Calu3 (cell line): ENCODE measurements at regions of chr14 and their contacts with region 1.

Region 1: DNA sequence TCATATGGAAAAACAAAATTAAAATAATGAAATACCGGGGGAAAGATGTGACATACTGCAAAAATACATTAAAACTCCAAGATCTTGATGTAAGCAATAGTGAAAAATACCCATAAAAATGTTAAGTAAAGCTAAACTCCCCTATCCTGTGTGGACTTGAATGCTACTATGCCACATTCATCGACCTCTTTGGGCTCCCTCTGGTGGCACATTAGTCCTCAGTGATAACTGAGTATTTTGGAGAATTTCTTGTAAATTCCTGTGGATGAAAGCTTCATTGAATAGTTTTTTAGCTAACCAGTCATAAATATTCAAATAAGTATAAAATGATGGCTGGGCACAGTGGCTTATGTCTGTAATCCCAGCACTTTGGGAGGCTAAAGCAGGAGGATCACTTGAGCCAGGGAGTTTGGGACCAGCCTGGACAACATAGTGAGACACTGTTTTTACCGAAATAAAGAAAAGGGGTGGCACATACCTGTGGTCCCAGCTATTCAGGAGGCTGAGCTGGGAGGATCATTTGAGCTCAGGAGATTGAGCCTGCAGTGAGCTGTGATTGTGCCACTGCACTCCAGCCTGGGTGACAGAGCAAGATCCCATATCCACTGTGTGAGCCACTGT is 42.4 kb upstream of the SGPP1 start:
- DNase-seq: peak; percentile 55
- H3K4me3 Mint-ChIP-seq: no peak overlapping the region
- H3K27ac Mint-ChIP-seq: no peak overlapping the region
- H3K4me1 Mint-ChIP-seq: no peaks in the 10 kb centered on the region
- H3K27me3 Mint-ChIP-seq: no peaks in the 10 kb centered on the region
- CTCF ChIP-seq: no peak

Region 2: GRCh38 chr14:63388763-63389431 is 381.4 kb before region 1 on chr14:
- CTCF ChIA-PET with region 1: interaction called, 5 read pairs
- intact Hi-C with region 1: loop called (anchors 5 kb)
- DNase-seq: peak; percentile 68
- H3K4me3 Mint-ChIP-seq: no peak overlapping the region
- H3K27ac Mint-ChIP-seq: no peak overlapping the region
- H3K4me1 Mint-ChIP-seq: no peaks in the 10 kb centered on the region
- H3K27me3 Mint-ChIP-seq: no peaks in the 10 kb centered on the region
- CTCF ChIP-seq: peak; percentile 45

Region 3: GRCh38 chr14:63632932-63633514 is 137.3 kb before region 1 on chr14:
- CTCF ChIA-PET with region 1: interaction called, 7 read pairs
- intact Hi-C with region 1: loop called (anchors 1 kb)
- DNase-seq: no peak
- H3K4me3 Mint-ChIP-seq: no peak overlapping the region
- H3K27ac Mint-ChIP-seq: no peak overlapping the region
- H3K4me1 Mint-ChIP-seq: no peaks in the 10 kb centered on the region
- H3K27me3 Mint-ChIP-seq: no peaks in the 10 kb centered on the region
- CTCF ChIP-seq: peak; percentile 24

Region 4: DNA sequence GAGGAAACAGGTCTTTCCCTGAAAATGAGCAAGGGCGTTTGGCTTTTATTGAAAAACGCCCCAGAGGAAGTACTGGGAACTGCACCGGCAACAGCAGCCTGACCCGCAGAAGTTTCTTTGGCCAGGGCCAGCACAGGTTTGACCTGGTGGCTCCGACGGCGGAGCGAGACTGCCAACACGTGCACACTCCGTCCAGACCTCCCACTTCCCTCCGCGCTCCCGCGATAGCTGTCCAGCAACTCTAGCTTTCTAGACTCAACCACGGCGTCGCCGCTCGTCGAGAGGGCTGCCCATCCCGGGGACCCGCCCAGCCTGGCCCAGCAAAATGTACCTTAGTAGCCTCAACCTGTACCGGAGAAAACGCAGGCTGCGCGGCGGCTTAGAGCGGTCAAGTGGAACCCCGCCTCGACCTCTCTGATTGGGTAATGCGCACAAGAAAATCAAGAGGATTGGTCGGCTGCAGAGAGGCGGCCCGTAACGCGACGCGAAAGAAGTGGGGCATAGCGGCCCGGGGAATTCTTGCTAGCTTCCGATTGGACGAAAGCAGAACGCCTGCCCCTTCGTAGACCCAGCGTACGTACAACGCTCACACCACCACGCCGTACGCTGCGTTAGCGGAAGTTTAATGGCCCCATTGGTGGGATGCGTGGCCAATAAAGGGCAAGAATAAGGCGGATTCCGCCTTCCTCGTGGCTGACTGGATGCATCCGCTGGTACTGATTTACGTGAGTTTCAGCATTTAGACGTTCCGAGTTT is 128.6 kb before region 1 on chr14 and contains the start of gene WDR89:
- CTCF ChIA-PET with region 1: interaction called, 6 read pairs
- intact Hi-C with region 1: loop called (anchors 2 kb)
- DNase-seq: peak; percentile 95
- H3K4me3 Mint-ChIP-seq: peak within 1 kb of the TSS; percentile 84
- H3K27ac Mint-ChIP-seq: peak within 1 kb of the TSS; percentile 97
- H3K4me1 Mint-ChIP-seq: peaks cover 9% of the 10 kb centered on the region
- H3K27me3 Mint-ChIP-seq: no peaks in the 10 kb centered on the region
- CTCF ChIP-seq: peak; percentile 78
- total RNA-seq, gene WDR89: 19.7 and 20.8 TPM in 2 replicates

Region 5: DNA sequence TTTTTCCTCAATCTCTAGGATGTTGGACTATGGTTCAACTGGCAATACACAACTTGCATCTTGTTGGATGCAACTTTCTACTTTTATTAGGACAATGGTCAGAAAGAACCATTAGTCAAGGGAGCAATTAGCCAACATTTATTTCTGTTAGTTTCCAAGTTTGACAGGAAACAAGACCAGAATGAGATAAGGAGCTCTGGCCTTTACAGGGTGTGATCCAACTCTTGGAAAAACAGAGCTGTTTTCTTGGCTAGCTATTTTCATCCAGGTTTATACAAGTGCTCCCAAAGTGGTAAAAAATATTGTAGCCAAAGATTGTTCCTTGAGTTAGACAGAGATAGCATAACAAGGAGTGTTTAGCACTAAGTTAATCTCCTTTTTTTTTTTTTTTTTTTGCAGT is 78.6 kb after region 1 on chr14:
- CTCF ChIA-PET with region 1: no interaction called
- intact Hi-C with region 1: no loop called
- DNase-seq: no peak
- H3K4me3 Mint-ChIP-seq: no peak overlapping the region
- H3K27ac Mint-ChIP-seq: no peak overlapping the region
- H3K4me1 Mint-ChIP-seq: no peaks in the 10 kb centered on the region
- H3K27me3 Mint-ChIP-seq: no peaks in the 10 kb centered on the region
- CTCF ChIP-seq: no peak